Right cardiac atrium (tissue), 5 donors: ENCODE measurements at regions of chr9 and their contacts with region 1.

Region 1: GRCh38 chr9:98707166-98708102 is 1.3 kb downstream of the GABBR2 start:
- DNase-seq: peak; percentile 38 to 79 (median 67)
- ATAC-seq: peak; percentile 69 to 74
- H3K4me3 ChIP-seq: no peak overlapping the region
- H3K27ac ChIP-seq: no peak overlapping the region
- H3K4me1 ChIP-seq: no peaks in the 10 kb centered on the region
- H3K27me3 ChIP-seq: no peaks in the 10 kb centered on the region

Region 2: DNA sequence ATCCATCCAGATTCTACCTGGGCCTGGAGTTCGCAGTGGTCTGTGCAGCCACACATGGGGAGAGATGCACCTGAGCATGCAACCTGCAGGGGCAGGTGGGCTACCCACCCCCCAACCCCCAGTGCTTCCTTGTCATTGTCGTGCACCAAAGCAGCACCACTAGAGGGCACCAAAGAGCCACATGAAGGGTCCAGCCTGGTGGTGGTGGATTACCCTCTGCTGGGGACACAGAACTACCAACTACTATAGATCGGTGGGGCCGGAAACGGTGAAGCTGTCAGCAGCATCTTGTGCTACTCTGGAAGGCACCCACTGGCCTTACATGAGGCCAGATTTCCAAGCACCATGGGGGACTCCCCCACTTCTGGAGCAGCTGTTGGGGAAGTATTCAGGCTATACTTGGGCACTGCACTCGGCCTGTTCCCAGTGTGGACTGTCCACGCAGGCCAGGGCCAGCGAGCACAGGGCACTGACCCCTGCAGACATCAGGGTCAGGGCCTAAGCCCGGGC is 391.8 kb before region 1 on chr9:
- intact Hi-C with region 1: loop called in 1 of 4 experiments (anchors 5 kb)
- DNase-seq: peak; percentile 66 to 89 (median 84)
- ATAC-seq: peak; percentile 86 to 89
- H3K4me3 ChIP-seq: no peak overlapping the region
- H3K27ac ChIP-seq: no peak overlapping the region
- H3K4me1 ChIP-seq: no peaks in the 10 kb centered on the region
- H3K27me3 ChIP-seq: no peaks in the 10 kb centered on the region